Caco-2 (cell line): ENCODE measurements at regions of chr1 and their contacts with region 1.

Region 1: GRCh38 chr1:60978421-60979357 is 103.7 kb upstream of the NFIA start:
- DNase-seq: peak in 1 of 2 experiments; percentile 37
- H3K4me3 ChIP-seq: no peak overlapping the region
- H3K4me3 Mint-ChIP-seq: no peak overlapping the region
- H3K27ac Mint-ChIP-seq: no peak overlapping the region
- H3K4me1 ChIP-seq: no peaks in the 10 kb centered on the region
- H3K4me1 Mint-ChIP-seq: no peaks in the 10 kb centered on the region
- H3K27me3 ChIP-seq: no peaks in the 10 kb centered on the region
- H3K27me3 Mint-ChIP-seq: no peaks in the 10 kb centered on the region
- CTCF ChIP-seq: peak; percentile 30 to 50

Region 2: DNA sequence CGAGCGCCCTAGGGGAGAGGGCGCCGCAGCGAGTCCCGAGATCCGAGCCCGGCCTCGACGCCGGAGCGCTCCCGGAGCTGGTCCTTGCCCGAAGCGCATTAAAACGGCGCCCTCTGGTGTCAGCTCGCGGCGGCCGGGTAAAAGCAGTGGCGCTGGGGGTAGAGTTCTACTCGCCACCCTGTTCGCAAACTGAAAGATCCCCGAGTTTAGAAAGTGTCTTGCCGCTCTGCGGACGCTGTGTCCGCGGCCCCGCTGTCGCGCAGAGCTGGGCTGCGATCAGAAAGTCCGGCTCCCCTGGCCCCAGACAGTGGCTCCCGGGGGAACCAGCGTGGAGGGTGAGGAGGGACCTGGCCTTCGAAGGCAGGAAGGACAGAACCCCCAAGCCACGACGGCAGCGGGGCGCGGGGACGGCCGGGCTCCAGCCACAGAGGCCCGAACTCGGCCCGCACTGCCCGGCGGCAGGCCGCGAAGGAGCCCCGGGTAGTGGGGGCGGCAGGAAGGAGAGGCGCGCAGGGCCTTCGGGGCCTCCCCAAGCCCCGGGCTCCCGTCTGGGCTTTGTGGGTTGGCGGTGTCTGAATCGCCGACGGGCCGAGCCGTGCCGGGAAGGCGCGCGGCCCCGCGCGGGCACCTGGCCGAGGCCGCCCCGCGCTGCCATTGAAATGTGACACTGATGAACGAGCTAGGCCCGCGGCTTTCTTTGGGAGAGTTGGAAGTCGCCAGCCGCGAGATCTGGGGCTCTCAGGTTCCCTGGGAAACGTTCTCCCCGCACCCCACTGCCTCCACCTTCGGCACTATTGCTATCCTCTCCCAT is 64.5 kb after region 1 on chr1:
- CTCF ChIA-PET with region 1: interaction called, 4 read pairs
- POLR2A ChIA-PET with region 1: no interaction called
- intact Hi-C with region 1: loop called (anchors 2 kb)
- DNase-seq: peak in 1 of 2 experiments; percentile 32
- H3K4me3 ChIP-seq: no peak overlapping the region
- H3K4me3 Mint-ChIP-seq: no peak overlapping the region
- H3K27ac Mint-ChIP-seq: no peak overlapping the region
- H3K4me1 ChIP-seq: no peaks in the 10 kb centered on the region
- H3K4me1 Mint-ChIP-seq: no peaks in the 10 kb centered on the region
- H3K27me3 ChIP-seq: no peaks in the 10 kb centered on the region
- H3K27me3 Mint-ChIP-seq: peaks cover 5% of the 10 kb centered on the region
- CTCF ChIP-seq: peak in 1 of 2 experiments; percentile 45

Region 3: DNA sequence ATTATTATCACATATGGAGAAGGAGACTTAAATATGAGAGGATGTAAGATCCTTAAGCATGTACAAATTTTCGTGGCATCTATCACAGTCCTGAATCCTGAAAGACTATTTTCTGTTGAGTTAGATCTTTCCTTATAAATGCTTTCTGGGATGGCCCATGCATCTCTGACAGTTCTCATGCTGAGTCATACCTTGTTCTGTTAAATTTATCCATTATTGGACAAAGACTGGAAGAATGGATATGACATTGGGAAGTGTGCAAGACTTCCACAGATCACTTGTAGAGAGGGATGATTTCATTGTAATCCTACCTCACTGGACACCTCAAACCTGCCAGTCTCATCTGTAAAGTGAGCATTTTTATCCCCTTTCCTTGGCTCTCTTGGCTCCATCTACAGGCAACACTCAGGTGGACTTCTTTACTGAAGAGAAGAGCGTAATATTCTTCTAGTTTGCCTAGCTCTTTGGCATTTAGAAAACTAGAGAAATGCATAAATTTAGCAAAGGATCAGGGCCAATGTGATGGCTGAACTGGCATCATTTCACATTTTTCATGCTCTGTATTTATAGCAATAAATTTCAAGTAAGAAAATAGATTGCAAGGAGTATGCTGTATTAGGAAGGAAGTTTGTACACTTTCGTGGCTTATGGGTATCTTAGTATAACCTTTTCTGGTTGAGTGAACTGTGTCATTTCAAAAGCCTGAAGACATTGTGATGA is 231.9 kb after region 1 on chr1:
- CTCF ChIA-PET with region 1: no interaction called
- POLR2A ChIA-PET with region 1: no interaction called
- intact Hi-C with region 1: loop called (anchors 1 kb)
- DNase-seq: peak in 1 of 2 experiments; percentile 1
- H3K4me3 ChIP-seq: no peak overlapping the region
- H3K4me3 Mint-ChIP-seq: no peak overlapping the region
- H3K27ac Mint-ChIP-seq: no peak overlapping the region
- H3K4me1 ChIP-seq: no peaks in the 10 kb centered on the region
- H3K4me1 Mint-ChIP-seq: no peaks in the 10 kb centered on the region
- H3K27me3 ChIP-seq: no peaks in the 10 kb centered on the region
- H3K27me3 Mint-ChIP-seq: no peaks in the 10 kb centered on the region
- CTCF ChIP-seq: peak in 1 of 2 experiments; percentile 21

Region 4: GRCh38 chr1:61588736-61589672 is 610.3 kb after region 1 on chr1:
- CTCF ChIA-PET with region 1: interaction called, 3 read pairs
- POLR2A ChIA-PET with region 1: no interaction called
- intact Hi-C with region 1: loop called (anchors 2 kb)
- DNase-seq: peak; percentile 61 to 66
- H3K4me3 ChIP-seq: no peak overlapping the region
- H3K4me3 Mint-ChIP-seq: no peak overlapping the region
- H3K27ac Mint-ChIP-seq: no peak overlapping the region
- H3K4me1 ChIP-seq: peaks cover 3% of the 10 kb centered on the region; the same call in 1 of the 2 replicates
- H3K4me1 Mint-ChIP-seq: peaks cover 7% of the 10 kb centered on the region
- H3K27me3 ChIP-seq: no peaks in the 10 kb centered on the region
- H3K27me3 Mint-ChIP-seq: no peaks in the 10 kb centered on the region
- CTCF ChIP-seq: peak; percentile 71 to 79

Region 5: DNA sequence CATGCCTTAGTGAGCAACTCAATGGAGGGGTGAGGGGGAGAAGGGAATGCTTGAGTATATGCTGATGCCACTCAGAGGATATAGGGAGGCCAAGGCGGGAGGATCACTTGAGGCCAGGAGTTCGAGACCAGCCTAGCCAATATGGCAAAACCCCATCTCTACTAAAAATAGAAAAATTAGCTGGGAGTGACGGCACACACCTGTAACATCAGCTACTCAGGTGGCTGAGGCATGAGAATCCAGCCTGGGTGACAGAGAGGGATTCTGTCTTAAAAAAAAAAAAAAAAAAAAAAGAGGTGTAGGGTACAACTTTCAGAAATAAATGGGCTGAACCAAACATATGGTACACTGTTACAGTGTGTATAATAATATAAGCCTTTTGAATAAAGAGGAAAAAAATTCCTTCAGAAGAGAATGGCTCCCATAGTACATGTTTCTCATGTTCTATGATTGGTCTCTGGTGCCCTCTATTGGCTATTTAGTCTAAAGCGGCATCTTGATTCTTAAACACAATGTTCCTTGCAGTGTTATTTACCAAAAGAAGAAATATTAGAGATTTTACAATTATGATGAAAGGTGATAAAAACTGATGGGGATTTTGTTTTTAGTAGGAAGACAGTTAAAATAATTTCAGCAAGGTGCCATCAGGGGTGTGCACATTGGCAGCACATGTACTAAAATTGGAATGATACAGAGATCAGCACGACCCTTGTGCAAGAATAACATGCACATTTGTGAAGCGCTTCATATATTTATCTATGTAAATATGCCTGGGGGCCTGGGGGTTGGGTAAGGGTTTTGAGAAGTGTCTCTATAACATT is 873.4 kb after region 1 on chr1:
- CTCF ChIA-PET with region 1: no interaction called
- POLR2A ChIA-PET with region 1: no interaction called
- intact Hi-C with region 1: loop called (anchors 10 kb)
- DNase-seq: peak in 1 of 2 experiments; percentile 27
- H3K4me3 ChIP-seq: no peak overlapping the region
- H3K4me3 Mint-ChIP-seq: no peak overlapping the region
- H3K27ac Mint-ChIP-seq: no peak overlapping the region
- H3K4me1 ChIP-seq: no peaks in the 10 kb centered on the region
- H3K4me1 Mint-ChIP-seq: peaks cover 10% of the 10 kb centered on the region
- H3K27me3 ChIP-seq: no peaks in the 10 kb centered on the region
- H3K27me3 Mint-ChIP-seq: no peaks in the 10 kb centered on the region
- CTCF ChIP-seq: peak; percentile 35 to 42